ENCODE measurements at regions of chr15 and their contacts with region 1.

Region 1: DNA sequence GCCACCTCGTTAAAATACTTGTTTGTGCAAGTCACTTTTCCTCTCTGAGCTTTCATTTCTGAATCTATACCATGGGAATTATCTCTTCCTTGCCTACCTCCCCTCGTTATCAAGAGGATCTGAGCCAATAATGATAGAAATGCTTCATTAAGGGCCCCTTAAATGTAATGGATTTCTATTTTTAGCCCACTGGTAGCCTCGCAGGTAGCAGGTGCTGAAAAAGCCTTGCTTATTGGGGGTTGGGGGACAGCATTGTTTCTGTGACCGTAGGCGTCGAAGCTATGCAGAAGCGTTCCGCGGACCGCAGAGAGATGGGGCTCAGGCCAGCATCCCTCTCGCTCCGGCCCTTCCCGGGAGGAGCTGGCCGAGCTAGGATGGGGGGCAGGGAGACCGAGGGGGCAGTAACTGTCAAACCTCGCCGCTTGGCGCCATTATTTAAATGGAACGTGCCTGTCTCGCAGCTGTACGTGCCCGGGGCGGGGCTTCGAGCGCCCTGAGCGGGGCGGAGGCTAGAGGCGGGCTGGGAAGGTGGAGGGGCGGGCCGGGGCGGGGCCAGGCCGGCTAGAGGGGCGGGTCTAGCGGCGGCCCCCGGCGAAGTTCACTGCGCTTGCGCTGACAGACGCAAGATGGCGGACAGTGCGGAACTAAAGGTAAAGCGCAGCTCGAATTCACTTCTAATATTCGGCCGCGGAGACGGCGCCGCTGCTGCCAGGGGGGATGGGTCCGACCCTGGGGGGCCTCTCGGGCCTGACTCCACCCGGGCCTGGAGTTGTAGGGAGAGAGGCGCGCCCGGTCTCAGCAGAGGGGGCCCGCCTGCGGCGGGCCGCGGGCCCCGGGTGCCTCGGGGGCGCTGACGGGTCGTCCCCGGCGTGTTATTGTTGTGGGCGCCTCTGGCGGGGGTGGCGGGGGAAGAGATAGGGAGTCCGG is at the start of gene PIAS1:
- DNase-seq: peak; percentile 92 to 96 (median 96)
- H3K4me3 ChIP-seq: peak within 1 kb of the TSS; percentile 97 to 100 (median 98)
- H3K27ac ChIP-seq: peak within 1 kb of the TSS; percentile 85 to 98 (median 95)
- H3K4me1 ChIP-seq: peaks cover 11 to 34% of the 10 kb centered on the region in 2 donors
- H3K27me3 ChIP-seq: no peaks in the 10 kb centered on the region
- CTCF ChIP-seq: peak in 1 of 6 experiments; percentile 17
- POLR2A ChIP-seq: peak; percentile 74 to 93
- total RNA-seq, gene PIAS1: 23.3 to 60.0 (median 39.0) TPM

Region 2: GRCh38 chr15:67750371-67750770 is 303.6 kb before region 1 on chr15:
- intact Hi-C with region 1: no loop called
- DNase-seq: no peak
- H3K4me3 ChIP-seq: no peak overlapping the region
- H3K27ac ChIP-seq: no peak overlapping the region
- H3K4me1 ChIP-seq: peaks cover 0 to 12% of the 10 kb centered on the region in 2 donors
- H3K27me3 ChIP-seq: no peaks in the 10 kb centered on the region
- CTCF ChIP-seq: no peak
- POLR2A ChIP-seq: no peak

Region 3: GRCh38 chr15:67941648-67942310 is 112.2 kb before region 1 on chr15:
- intact Hi-C with region 1: no loop called
- DNase-seq: no peak
- H3K4me3 ChIP-seq: no peak overlapping the region
- H3K27ac ChIP-seq: no peak overlapping the region
- H3K4me1 ChIP-seq: peaks cover 4 to 5% of the 10 kb centered on the region in 2 donors
- H3K27me3 ChIP-seq: no peaks in the 10 kb centered on the region
- CTCF ChIP-seq: no peak
- POLR2A ChIP-seq: no peak

Region 4: GRCh38 chr15:68114356-68114755 is 60.4 kb after region 1 on chr15:
- intact Hi-C with region 1: loop called in 1 of 2 experiments (anchors 10 kb)
- DNase-seq: no peak
- H3K4me3 ChIP-seq: peak overlapping the region in 2 of 4 donors; percentile 1 to 43
- H3K27ac ChIP-seq: peak overlapping the region in 3 of 5 donors; percentile 45 to 67 (median 65)
- H3K4me1 ChIP-seq: peaks cover 11 to 40% of the 10 kb centered on the region in 2 donors
- H3K27me3 ChIP-seq: no peaks in the 10 kb centered on the region
- CTCF ChIP-seq: no peak
- POLR2A ChIP-seq: no peak

Region 5: DNA sequence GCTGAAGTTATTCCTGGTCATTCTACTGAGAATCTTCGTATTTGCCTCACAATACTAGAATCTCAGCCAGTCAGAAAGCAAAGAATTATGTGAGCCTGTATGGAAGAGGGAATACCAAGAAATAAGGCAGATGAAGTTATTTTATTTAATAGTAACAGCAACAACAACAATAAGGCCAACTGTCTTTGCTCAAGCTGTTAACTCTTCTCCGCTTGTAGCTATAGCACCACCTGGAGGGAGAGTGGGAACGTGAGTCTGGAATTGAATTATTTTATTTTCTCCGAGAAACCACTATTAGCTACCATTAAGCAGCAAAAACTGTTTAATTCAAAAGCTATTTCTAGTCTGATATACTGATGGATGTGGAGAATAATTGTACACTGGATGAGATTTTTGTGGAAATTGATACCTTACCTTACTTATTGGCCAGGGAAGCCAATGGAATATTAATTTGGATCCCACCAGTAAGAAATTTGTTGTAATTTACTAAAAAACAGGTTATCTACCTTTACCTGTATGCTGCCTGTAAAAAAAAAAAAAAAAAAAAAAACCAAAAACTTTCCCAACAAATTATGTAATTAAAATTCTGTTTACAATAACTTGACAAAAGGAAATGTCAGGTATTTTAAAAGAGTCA is 101.1 kb after region 1 on chr15:
- intact Hi-C with region 1: loop called in 1 of 2 experiments (anchors 10 kb)
- DNase-seq: peak; percentile 37 to 75 (median 56)
- H3K4me3 ChIP-seq: no peak overlapping the region
- H3K27ac ChIP-seq: no peak overlapping the region
- H3K4me1 ChIP-seq: peaks cover 0 to 16% of the 10 kb centered on the region in 2 donors
- H3K27me3 ChIP-seq: no peaks in the 10 kb centered on the region
- CTCF ChIP-seq: peak; percentile 73 to 87 (median 79)
- POLR2A ChIP-seq: no peak

Region 6: GRCh38 chr15:68271854-68272471 is 218.0 kb after region 1 on chr15:
- intact Hi-C with region 1: no loop called
- DNase-seq: peak; percentile 69 to 90 (median 84)
- H3K4me3 ChIP-seq: peak overlapping the region in 1 of 4 donors; percentile 25
- H3K27ac ChIP-seq: peak overlapping the region in 4 of 5 donors; percentile 85 to 94 (median 88)
- H3K4me1 ChIP-seq: peaks cover 9 to 38% of the 10 kb centered on the region in 2 donors
- H3K27me3 ChIP-seq: no peaks in the 10 kb centered on the region
- CTCF ChIP-seq: no peak
- POLR2A ChIP-seq: peak; percentile 39 to 84

Measured in adrenal gland (tissue), 19 donors.